ENCODE measurements at regions of chr12 and their contacts with region 1.

Region 1: GRCh38 chr12:98725476-98726247 is 80.6 kb downstream of the APAF1 start:
- DNase-seq: peak in 3 of 5 donors; percentile 12 to 34 (median 21)
- H3K4me3 ChIP-seq: no peak overlapping the region
- H3K4me3 Mint-ChIP-seq: no peak overlapping the region
- H3K27ac ChIP-seq: no peak overlapping the region
- H3K27ac Mint-ChIP-seq: peak overlapping the region in 1 of 7 donors; percentile 9
- H3K4me1 ChIP-seq: no peaks in the 10 kb centered on the region
- H3K4me1 Mint-ChIP-seq: peaks cover 0 to 6% (median 3%) of the 10 kb centered on the region in 4 donors
- H3K27me3 ChIP-seq: no peaks in the 10 kb centered on the region
- H3K27me3 Mint-ChIP-seq: no peaks in the 10 kb centered on the region

Region 2: DNA sequence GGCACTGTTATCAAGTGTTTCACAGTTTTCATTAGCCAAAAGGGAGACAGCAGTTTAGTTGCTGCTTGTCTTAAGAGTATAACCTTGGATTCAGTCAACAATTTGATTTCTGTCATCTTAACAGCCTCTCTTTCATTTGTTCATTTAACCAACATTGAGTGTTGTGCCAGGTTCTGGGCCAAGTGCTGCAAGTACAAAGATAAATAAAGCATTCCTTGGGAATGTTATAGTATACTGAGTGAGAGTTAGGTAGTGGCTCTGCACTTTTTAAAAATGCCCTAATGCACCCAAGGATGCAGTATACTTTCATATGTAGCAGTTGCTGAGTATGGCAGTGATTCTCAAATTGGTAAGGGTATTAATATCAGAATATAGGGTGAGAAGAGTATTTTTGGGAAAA is 65.1 kb before region 1 on chr12:
- CTCF ChIA-PET with region 1: no interaction called
- POLR2A ChIA-PET with region 1: no interaction called
- intact Hi-C with region 1: no loop called
- DNase-seq: no peak
- H3K4me3 ChIP-seq: no peak overlapping the region
- H3K4me3 Mint-ChIP-seq: no peak overlapping the region
- H3K27ac ChIP-seq: no peak overlapping the region
- H3K27ac Mint-ChIP-seq: no peak overlapping the region
- H3K4me1 ChIP-seq: peaks cover 7% of the 10 kb centered on the region
- H3K4me1 Mint-ChIP-seq: peaks cover 9 to 10% (median 10%) of the 10 kb centered on the region in 4 donors
- H3K27me3 ChIP-seq: no peaks in the 10 kb centered on the region
- H3K27me3 Mint-ChIP-seq: no peaks in the 10 kb centered on the region

Region 3: DNA sequence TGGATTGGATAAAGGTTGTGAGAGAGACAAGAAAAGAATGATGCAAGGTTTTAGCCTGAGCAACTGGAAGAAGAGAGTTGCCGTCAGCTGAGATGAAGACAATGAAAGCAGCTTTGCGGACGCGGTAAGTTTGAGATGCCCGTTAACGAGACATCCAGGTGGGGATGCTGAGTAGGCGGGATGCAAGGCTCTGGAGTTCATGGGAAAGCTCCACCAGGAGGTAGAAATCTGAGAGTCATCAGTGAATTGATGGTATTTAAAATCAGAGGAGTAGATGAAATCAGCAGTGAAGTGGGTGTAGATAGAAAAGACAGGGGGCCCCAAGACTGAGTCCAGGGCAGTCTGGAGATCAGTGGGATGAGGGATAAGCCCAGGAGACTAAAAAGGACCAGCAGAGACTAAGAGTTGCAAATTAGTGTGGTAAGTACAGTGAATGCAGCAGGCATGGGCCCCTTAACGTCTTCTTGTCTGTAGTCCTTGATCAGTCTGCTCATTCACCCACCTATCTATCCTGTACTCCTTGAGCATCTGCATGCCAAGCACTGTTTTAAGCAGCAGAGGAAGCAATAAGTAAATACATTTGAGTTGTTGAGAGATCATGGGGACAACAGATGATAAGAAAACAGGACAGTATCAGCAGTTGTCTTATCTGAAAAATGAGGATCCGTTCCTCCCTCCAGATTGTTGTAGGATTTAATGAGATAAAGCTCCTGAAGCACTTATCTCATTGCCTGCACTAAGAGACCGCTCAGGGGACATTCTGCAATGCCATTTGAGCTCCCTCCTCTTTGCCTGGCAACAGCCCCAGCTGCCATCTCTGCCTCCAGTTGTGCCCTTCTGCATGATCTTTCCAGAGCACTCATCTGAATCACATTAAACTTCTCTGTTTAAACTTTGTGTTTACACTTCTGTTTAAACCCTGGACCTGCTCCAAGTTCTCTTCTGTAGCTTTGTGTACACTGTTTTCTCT is 11.0 kb after region 1 on chr12:
- CTCF ChIA-PET with region 1: interaction called, 12 read pairs
- POLR2A ChIA-PET with region 1: no interaction called
- intact Hi-C with region 1: no loop called
- DNase-seq: no peak
- H3K4me3 ChIP-seq: no peak overlapping the region
- H3K4me3 Mint-ChIP-seq: no peak overlapping the region
- H3K27ac ChIP-seq: no peak overlapping the region
- H3K27ac Mint-ChIP-seq: peak overlapping the region in 3 of 7 donors; percentile 11 to 85 (median 43)
- H3K4me1 ChIP-seq: no peaks in the 10 kb centered on the region
- H3K4me1 Mint-ChIP-seq: no peaks in the 10 kb centered on the region
- H3K27me3 ChIP-seq: no peaks in the 10 kb centered on the region
- H3K27me3 Mint-ChIP-seq: peaks cover 0 to 2% of the 10 kb centered on the region in 2 donors

Region 4: DNA sequence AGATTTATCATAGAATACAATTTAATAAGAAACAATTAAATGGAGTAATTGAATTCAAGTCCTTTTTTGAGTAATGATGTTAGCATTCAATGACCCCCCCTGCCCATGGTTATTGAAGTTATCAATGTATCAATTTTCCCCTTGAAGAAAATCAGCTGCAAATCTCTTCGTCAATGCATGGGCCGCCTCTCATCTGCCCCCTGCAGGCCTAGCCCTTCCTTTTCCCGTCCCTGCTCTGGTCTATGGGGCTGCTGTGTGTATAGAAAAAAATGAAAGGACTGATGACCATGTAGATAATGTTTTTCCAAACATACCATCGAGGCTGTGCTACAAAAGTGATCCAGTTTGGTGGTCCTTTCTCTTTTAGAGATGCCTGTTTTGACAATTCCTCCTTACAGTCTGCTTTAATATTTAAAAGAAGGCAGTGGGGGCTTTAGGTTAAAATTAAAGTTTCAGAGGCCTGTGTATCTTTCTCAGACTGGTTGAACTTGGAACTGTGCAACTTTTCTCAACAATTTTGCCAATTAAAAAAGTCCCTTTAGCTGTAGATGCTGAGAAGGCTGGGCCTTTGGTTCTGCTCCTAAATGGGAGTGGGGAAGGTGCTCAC is 17.8 kb after region 1 on chr12:
- CTCF ChIA-PET with region 1: interaction called, 12 read pairs
- POLR2A ChIA-PET with region 1: no interaction called
- intact Hi-C with region 1: no loop called
- DNase-seq: peak in 3 of 5 donors; percentile 5 to 24 (median 19)
- H3K4me3 ChIP-seq: no peak overlapping the region
- H3K4me3 Mint-ChIP-seq: no peak overlapping the region
- H3K27ac ChIP-seq: no peak overlapping the region
- H3K27ac Mint-ChIP-seq: peak overlapping the region in 1 of 7 donors; percentile 50
- H3K4me1 ChIP-seq: peaks cover 20% of the 10 kb centered on the region
- H3K4me1 Mint-ChIP-seq: peaks cover 6 to 14% (median 10%) of the 10 kb centered on the region in 4 donors
- H3K27me3 ChIP-seq: no peaks in the 10 kb centered on the region
- H3K27me3 Mint-ChIP-seq: peaks cover 11 to 20% of the 10 kb centered on the region in 2 donors

Region 5: DNA sequence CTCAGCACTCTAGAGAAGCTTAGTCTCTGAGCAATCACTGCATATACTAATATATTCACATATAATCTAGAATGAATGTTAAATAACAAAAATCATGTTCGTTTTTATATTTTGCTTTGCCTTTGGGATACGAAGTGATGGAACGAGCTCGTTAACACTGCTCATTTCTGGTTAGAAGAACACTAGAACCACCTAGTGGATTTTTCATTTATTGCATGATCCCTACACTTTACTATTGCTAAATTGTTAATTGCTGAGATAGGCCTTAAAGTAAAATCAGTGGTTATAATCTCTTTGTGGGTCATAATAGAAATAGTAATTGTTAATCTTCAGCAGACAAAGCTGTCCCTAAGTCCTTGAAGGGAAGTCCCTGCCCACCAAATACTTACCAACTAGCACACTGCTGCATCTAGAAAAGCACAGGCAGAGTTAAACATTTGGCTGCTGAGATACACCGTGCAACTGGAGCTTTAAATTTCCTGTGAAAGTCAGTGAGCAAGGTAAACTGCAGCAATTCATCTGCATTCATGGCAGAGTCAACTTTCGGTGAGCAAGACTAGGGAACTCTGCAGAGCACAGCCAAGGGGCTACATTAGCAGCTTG is 273.1 kb after region 1 on chr12:
- CTCF ChIA-PET with region 1: interaction called, 10 read pairs
- POLR2A ChIA-PET with region 1: no interaction called
- intact Hi-C with region 1: no loop called
- DNase-seq: peak in 2 of 5 donors; percentile 10 to 16
- H3K4me3 ChIP-seq: no peak overlapping the region
- H3K4me3 Mint-ChIP-seq: no peak overlapping the region
- H3K27ac ChIP-seq: no peak overlapping the region
- H3K27ac Mint-ChIP-seq: no peak overlapping the region
- H3K4me1 ChIP-seq: no peaks in the 10 kb centered on the region
- H3K4me1 Mint-ChIP-seq: peaks cover 0 to 1% (median under 1%) of the 10 kb centered on the region in 4 donors
- H3K27me3 ChIP-seq: no peaks in the 10 kb centered on the region
- H3K27me3 Mint-ChIP-seq: peaks cover 3 to 4% of the 10 kb centered on the region in 2 donors

Measured in CD4-positive, alpha-beta memory T cell (primary cell).